ENCODE measurements at regions of chr3 and their contacts with region 1.

Region 1: GRCh38 chr3:129934234-129935123 is 40.0 kb upstream of the TRH start:
- DNase-seq: peak; percentile 35
- ATAC-seq: peak; percentile 75
- H3K4me3 ChIP-seq: peak overlapping the region; percentile 34 to 69
- H3K27ac ChIP-seq: no peak overlapping the region
- H3K4me1 ChIP-seq: no peaks in the 10 kb centered on the region
- H3K27me3 ChIP-seq: no peaks in the 10 kb centered on the region
- CTCF ChIP-seq: peak; percentile 97

Region 2: GRCh38 chr3:129622226-129622874 is 312.1 kb before region 1 on chr3:
- CTCF ChIA-PET with region 1: no interaction called
- POLR2A ChIA-PET with region 1: no interaction called
- in situ Hi-C with region 1: no loop called
- intact Hi-C with region 1: no loop called
- DNase-seq: no peak
- ATAC-seq: no peak
- H3K4me3 ChIP-seq: no peak overlapping the region
- H3K27ac ChIP-seq: peak overlapping the region; percentile 55; the same call in 1 of the 2 replicates
- H3K4me1 ChIP-seq: peaks cover 35% of the 10 kb centered on the region
- H3K27me3 ChIP-seq: no peaks in the 10 kb centered on the region
- CTCF ChIP-seq: no peak

Region 3: GRCh38 chr3:129824926-129825541 is 109.4 kb before region 1 on chr3:
- CTCF ChIA-PET with region 1: interaction called, 3 read pairs
- POLR2A ChIA-PET with region 1: no interaction called
- in situ Hi-C with region 1: no loop called
- intact Hi-C with region 1: loop called (anchors 5 kb)
- DNase-seq: peak; percentile 47
- ATAC-seq: peak; percentile 87
- H3K4me3 ChIP-seq: no peak overlapping the region
- H3K27ac ChIP-seq: no peak overlapping the region
- H3K4me1 ChIP-seq: no peaks in the 10 kb centered on the region
- H3K27me3 ChIP-seq: no peaks in the 10 kb centered on the region
- CTCF ChIP-seq: peak; percentile 87